ENCODE measurements at regions of chr11 and their contacts with region 1.

Region 1: GRCh38 chr11:46006418-46007070 is 84.1 kb downstream of the LARGE2 start:
- DNase-seq: peak in 3 of 5 donors; percentile 36 to 46 (median 43)
- H3K4me3 ChIP-seq: no peak overlapping the region
- H3K4me3 Mint-ChIP-seq: no peak overlapping the region
- H3K27ac ChIP-seq: no peak overlapping the region
- H3K27ac Mint-ChIP-seq: peak overlapping the region in 4 of 8 donors; percentile 4 to 68 (median 32)
- H3K4me1 ChIP-seq: no peaks in the 10 kb centered on the region
- H3K4me1 Mint-ChIP-seq: peaks cover 6 to 10% (median 7%) of the 10 kb centered on the region in 3 donors
- H3K27me3 ChIP-seq: no peaks in the 10 kb centered on the region
- H3K27me3 Mint-ChIP-seq: no peaks in the 10 kb centered on the region

Region 2: GRCh38 chr11:46017341-46017740 is 10.8 kb after region 1 on chr11:
- CTCF ChIA-PET with region 1: interaction called, 13 read pairs
- POLR2A ChIA-PET with region 1: no interaction called
- DNase-seq: no peak
- H3K4me3 ChIP-seq: no peak overlapping the region
- H3K4me3 Mint-ChIP-seq: no peak overlapping the region
- H3K27ac ChIP-seq: no peak overlapping the region
- H3K27ac Mint-ChIP-seq: peak overlapping the region in 1 of 8 donors; percentile 47
- H3K4me1 ChIP-seq: no peaks in the 10 kb centered on the region
- H3K4me1 Mint-ChIP-seq: peaks cover 5 to 28% (median 21%) of the 10 kb centered on the region in 3 donors
- H3K27me3 ChIP-seq: no peaks in the 10 kb centered on the region
- H3K27me3 Mint-ChIP-seq: no peaks in the 10 kb centered on the region

Measured in CD8-positive, alpha-beta memory T cell (primary cell).